ENCODE measurements at regions of chr5 and their contacts with region 1.

Region 1: DNA sequence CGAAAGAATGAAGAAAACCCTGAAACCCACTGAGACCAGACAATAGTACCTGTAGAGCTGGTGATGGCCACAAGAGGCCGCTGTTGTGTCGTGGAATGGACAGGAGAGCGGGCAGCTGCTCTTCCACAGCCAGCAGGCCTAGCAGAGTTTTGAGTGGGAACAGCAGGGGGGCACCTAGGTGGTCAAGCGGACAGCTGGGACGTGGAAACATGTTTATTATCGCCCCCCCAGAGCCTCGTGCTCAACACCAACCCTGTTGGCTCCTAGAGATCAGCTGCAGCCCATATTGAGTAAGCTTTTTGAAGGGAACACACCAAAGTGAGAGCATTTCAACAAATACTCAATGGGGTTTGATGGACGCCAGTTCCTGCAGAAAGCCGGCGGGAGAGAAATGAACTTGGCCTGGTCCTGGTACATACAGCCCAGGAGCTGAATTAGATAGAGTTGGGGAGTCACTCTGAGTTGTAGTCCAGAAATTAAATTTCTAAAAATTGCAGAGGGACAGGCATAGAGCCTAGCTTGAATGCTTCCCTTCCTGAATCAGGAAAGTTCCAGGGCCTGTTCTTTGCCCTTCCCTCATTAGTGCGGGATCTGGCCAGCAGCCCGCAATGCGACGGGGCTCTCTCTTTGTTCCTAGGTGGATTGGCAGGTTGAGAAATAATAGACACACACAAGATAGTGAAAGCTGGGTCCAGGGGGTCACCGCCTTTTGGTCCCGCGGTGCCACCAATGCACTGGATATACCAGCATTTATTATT is 33.8 kb downstream of the MFAP3 start:
- DNase-seq: peak; percentile 73
- H3K4me3 ChIP-seq: peak overlapping the region in 1 of 2 experiments; percentile 53; a peak in 2 of 4 replicates
- H3K27ac ChIP-seq: no peak overlapping the region
- H3K4me1 ChIP-seq: peaks cover 0 to 5% of the 10 kb centered on the region in 2 experiments; a peak in 2 of 4 replicates
- H3K27me3 ChIP-seq: no peaks in the 10 kb centered on the region
- CTCF ChIP-seq: peak; percentile 95
- EP300 ChIP-seq: no peak
- RAD21 ChIP-seq: peak; percentile 98

Region 2: DNA sequence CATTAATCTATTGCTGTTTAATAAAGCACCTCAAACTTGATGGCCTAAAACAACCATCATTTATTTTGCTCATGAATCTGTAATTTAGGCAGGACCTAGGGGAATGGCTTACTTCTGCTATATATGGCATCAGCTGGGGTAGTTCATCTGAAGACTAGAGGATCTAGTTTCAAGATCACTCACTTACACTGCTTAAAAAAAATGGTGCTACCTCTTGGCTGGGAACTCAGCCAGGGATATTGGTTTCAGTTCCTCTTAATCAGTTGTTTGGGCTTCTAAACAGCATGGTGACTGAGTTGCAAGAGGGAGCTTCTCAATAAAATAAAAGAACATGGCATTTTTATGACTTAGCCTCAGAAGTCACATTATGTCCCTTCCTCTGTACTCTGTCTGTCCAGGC is 175.9 kb before region 1 on chr5:
- CTCF ChIA-PET with region 1: no interaction called
- POLR2A ChIA-PET with region 1: no interaction called
- DNase-seq: no peak
- H3K4me3 ChIP-seq: no peak overlapping the region
- H3K27ac ChIP-seq: no peak overlapping the region
- H3K4me1 ChIP-seq: peaks cover 0 to 7% of the 10 kb centered on the region in 2 experiments; a peak in 2 of 4 replicates
- H3K27me3 ChIP-seq: no peaks in the 10 kb centered on the region
- CTCF ChIP-seq: no peak
- EP300 ChIP-seq: no peak
- RAD21 ChIP-seq: no peak

Region 3: DNA sequence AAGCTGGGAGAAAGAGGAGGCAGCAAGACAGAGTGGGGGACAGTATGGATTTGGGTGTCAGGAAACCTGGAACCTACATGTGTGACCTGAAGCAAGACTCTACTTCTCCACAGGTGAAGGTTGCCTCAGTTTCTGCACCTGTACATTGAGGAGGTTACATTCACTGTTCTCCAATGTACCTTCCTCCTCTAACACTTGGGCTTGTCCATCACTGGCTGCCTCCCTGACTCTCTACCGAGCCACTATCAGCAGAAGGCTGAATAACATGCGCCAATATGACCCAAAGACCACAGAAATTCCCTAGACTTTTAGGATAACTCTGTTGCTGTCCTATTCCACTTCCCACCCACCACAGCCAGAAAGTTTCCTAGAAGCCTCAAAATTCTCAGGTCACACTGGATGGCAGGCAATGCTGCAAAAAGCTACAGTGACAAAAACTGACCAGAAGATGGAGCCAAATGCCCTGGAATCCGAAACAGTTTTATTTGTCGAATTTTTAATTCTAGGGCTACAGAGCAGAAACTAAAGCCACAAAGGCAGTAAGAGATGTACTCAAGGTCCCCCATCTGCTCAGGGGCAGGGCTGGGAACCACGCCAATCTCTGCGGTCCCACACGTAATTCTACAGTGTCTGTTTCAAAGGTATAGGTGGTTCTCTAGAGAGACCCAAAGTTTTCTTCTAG is 98.3 kb before region 1 on chr5:
- CTCF ChIA-PET with region 1: interaction called, 15 read pairs
- POLR2A ChIA-PET with region 1: no interaction called
- DNase-seq: peak; percentile 48
- H3K4me3 ChIP-seq: no peak overlapping the region
- H3K27ac ChIP-seq: no peak overlapping the region
- H3K4me1 ChIP-seq: no peaks in the 10 kb centered on the region
- H3K27me3 ChIP-seq: no peaks in the 10 kb centered on the region
- CTCF ChIP-seq: peak; percentile 84
- EP300 ChIP-seq: no peak
- RAD21 ChIP-seq: peak; percentile 90

Region 4: GRCh38 chr5:154058055-154059038 is 14.2 kb before region 1 on chr5:
- CTCF ChIA-PET with region 1: interaction called, 29 read pairs
- POLR2A ChIA-PET with region 1: no interaction called
- DNase-seq: no peak
- H3K4me3 ChIP-seq: no peak overlapping the region
- H3K27ac ChIP-seq: no peak overlapping the region
- H3K4me1 ChIP-seq: no peaks in the 10 kb centered on the region; a peak in 1 of 4 replicates
- H3K27me3 ChIP-seq: no peaks in the 10 kb centered on the region
- CTCF ChIP-seq: no peak
- EP300 ChIP-seq: no peak
- RAD21 ChIP-seq: no peak

Region 5: GRCh38 chr5:154179846-154180710 is 107.5 kb after region 1 on chr5:
- CTCF ChIA-PET with region 1: interaction called, 184 read pairs
- POLR2A ChIA-PET with region 1: no interaction called
- DNase-seq: peak; percentile 64
- H3K4me3 ChIP-seq: no peak overlapping the region; a peak in 1 of 4 replicates
- H3K27ac ChIP-seq: no peak overlapping the region
- H3K4me1 ChIP-seq: no peaks in the 10 kb centered on the region
- H3K27me3 ChIP-seq: no peaks in the 10 kb centered on the region
- CTCF ChIP-seq: peak; percentile 78
- EP300 ChIP-seq: no peak
- RAD21 ChIP-seq: peak; percentile 83

Region 6: DNA sequence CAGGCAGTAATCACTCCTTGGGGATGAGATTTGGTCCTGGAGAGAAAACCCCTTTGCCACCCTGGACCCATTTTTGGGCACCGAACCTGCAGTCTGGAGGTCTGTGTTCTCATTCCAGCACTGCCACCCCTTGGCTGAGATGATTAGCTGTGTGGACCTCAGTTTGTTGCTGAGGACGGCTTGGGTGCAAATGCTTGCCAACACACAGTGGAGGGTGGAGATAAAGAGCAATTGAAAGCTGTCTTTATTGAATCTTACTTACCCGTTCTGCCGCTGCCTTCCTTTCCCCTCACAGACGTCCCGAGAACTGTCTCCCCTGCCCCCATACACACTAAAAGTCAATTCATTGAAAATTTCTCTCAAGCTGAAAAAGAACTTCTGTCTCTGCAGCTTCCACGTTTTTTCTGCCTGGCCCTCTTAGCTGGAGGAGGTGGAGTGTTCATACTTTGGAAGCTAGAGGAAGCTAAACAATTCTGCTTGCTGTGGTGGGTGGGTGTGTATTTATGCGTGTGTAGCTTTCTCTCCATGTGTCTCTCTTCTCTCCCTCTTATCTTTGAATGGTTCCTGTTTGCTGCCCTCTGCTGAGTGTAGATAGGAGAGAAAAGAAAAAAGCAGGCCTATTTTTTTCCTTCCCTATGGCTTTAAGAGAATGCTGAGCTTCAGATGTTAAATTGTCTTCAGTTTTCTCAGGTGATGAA is 124.5 kb after region 1 on chr5:
- CTCF ChIA-PET with region 1: interaction called, 23 read pairs
- POLR2A ChIA-PET with region 1: interaction called, 4 read pairs
- DNase-seq: peak; percentile 59
- H3K4me3 ChIP-seq: no peak overlapping the region
- H3K27ac ChIP-seq: peak overlapping the region in 1 of 2 experiments; percentile 1; a peak in 1 of 4 replicates
- H3K4me1 ChIP-seq: peaks cover 24 to 45% of the 10 kb centered on the region in 2 experiments
- H3K27me3 ChIP-seq: no peaks in the 10 kb centered on the region
- CTCF ChIP-seq: peak; percentile 51
- EP300 ChIP-seq: no peak
- RAD21 ChIP-seq: peak; percentile 57

Region 7: DNA sequence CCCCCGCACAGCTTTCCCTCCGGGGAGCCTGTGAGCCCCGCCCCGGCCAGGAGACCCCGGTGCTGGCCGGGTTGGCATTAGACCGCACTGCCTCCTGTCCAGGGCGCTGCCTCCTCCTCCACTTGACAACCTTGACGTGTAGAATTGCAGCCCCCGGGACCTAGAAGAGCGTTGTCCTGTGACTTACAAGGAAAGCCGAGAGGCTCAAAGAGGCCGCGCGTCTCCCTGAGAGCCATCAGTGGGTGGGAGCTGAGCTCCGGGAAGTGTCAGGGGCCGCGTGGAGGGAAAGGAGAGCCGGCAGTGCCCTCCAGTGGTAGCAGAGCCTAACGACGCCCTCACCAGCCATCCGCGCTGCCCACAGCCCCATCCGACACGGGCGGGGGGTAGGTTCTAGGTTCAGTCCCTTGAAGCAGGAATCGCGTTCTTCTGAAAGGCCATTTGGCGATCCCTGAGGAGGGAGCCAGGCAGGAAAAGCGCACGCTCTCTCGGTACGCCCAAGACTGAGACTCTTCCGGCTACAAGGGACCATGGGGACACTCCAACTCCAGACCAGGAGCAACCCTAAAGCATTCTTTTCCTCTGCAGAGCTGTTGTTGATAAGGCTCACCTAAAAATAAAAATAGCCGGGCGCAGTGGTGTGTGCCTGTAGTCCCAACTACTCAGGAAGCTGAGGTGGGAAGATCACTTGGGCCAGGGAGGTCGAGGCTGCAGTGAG is 332.6 kb after region 1 on chr5:
- CTCF ChIA-PET with region 1: interaction called, 105 read pairs
- POLR2A ChIA-PET with region 1: interaction called, 8 read pairs
- DNase-seq: peak; percentile 92
- H3K4me3 ChIP-seq: peak overlapping the region in 1 of 2 experiments; percentile 24; a peak in 1 of 4 replicates
- H3K27ac ChIP-seq: no peak overlapping the region
- H3K4me1 ChIP-seq: peaks cover 4 to 11% of the 10 kb centered on the region in 2 experiments; a peak in 2 of 4 replicates
- H3K27me3 ChIP-seq: no peaks in the 10 kb centered on the region
- CTCF ChIP-seq: peak; percentile 78
- EP300 ChIP-seq: no peak
- RAD21 ChIP-seq: peak; percentile 97

Measured in SK-N-SH (cell line).